ENCODE measurements at regions of chr15 and their contacts with region 1.

Region 1: DNA sequence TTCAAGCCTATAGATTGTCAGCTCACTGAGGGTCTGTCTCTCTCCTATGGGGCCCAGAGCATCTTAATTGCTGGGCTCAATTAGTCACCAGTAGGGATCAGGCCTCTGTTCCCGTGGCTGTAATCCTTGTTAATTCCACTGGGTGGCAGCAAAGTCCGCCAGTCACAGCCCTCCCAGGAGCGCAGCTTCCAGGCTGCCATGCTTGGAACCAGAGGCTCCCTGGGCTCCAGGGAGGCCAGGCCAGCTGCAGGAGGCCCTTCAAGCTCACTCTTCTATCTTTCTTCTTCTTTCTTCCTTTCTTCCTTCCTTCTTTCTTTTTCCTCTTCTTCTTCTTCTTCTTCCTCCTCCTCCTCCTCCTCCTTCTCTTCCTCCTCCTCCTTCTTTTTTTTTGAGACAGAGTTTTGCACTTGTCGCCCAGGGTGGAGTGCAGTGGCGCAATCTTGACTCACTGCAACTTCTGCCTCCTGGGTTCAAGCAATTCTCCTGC is 14.4 kb downstream of the RNU5B-1 start:
- DNase-seq: peak; percentile 56
- ATAC-seq: peak; percentile 100
- H3K4me3 Mint-ChIP-seq: no peak overlapping the region
- H3K27ac Mint-ChIP-seq: peak overlapping the region; percentile 24
- H3K4me1 Mint-ChIP-seq: no peaks in the 10 kb centered on the region
- H3K27me3 Mint-ChIP-seq: peaks cover 23% of the 10 kb centered on the region
- CTCF ChIP-seq: peak; percentile 91

Region 2: DNA sequence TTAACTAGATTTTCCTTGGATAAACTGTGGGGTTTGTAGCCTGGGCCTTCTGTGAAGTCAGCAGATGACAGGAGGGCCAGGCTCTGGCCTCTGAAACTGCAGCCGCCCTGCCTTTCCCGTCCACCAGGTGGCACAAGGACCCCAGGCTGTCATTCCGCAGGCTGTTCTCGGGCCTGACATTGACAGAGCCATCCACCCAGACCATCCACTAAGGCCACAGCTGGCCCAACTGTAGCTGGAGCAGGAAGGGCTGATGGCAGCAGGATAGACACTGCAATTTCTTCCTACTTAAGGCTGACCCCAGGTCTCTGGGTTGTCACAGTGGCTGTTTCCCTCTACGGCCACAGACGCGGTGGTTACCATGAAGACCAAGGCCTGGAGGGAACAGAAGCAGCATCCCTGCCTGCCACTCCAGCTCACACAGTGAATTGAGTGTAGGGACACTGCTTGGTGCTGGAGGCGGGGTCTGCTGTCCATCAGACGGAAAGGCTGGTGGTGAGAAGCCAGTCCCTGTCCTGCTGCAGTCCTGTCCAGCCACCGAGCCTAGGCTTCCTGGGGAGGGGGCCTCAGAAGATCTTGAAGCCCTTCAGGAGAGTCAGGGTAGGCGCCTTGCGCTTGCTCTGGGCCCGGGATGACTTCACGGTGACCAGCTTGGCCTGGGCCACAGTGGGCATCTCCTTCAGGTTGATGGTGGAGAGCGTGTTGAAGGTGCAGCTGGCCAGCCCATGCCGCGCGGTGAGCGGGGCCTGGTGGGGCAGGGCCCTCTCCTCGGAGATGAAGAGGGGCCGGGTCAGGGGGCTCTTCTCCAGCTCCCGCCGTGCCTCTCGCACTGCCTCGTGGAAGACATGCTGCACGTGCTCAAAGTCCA is 264.3 kb before region 1 on chr15:
- CTCF ChIA-PET with region 1: no interaction called
- POLR2A ChIA-PET with region 1: no interaction called
- intact Hi-C with region 1: loop called (anchors 1 kb)
- DNase-seq: peak; percentile 44
- ATAC-seq: peak; percentile 61
- H3K4me3 Mint-ChIP-seq: no peak overlapping the region
- H3K27ac Mint-ChIP-seq: no peak overlapping the region
- H3K4me1 Mint-ChIP-seq: peaks cover 12% of the 10 kb centered on the region
- H3K27me3 Mint-ChIP-seq: no peaks in the 10 kb centered on the region
- CTCF ChIP-seq: no peak

Region 3: DNA sequence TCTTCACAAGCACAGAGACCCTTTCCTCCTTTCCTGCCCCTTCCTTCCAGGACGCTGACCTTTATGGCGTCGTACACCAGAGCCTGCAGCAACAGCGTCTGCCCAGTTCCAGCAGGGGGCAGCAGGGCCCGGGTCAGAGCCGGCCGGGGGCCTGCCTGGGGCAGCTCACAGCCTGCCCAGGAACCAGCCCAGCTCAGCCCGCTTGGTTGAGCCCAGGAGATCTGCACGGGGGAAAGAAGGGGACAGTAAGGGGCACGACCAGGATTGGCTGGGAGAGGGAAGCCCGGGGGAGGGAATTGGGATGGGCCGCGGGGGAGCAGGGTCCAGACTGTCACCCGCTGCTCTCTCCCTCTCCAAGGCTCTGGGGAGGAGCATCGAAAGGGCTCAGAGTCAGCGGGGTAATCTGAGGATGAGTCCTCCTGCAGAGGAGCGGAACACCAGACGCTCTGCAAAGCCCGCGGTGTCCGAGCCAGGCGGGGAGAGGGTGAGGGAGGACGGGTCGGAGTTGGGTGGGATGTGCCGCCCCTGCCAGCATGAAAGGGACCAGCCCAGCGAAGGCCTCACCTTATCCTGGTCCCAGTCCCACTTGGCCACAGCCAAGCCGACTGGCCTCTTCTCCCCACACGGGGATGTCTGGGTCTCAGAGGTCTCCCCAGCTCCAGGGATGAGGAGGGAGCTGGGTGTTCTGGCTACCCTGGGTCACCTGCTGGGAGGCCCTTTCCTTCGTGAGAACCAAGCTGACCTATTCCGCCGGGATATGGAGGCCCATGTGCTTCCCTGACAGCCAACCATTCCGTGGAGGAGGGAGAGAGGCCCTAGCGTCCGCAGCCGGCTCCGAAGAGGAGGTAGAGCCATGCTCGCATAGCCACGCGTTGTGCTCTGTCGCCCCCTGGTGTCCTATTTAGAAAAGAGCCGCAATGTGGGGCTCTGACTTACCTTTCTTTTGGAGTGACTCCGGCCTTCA is 66.3 kb after region 1 on chr15:
- CTCF ChIA-PET with region 1: interaction called, 76 read pairs
- POLR2A ChIA-PET with region 1: no interaction called
- intact Hi-C with region 1: loop called (anchors 1 kb)
- DNase-seq: peak; percentile 68
- ATAC-seq: peak; percentile 84
- H3K4me3 Mint-ChIP-seq: peak overlapping the region; percentile 89
- H3K27ac Mint-ChIP-seq: no peak overlapping the region
- H3K4me1 Mint-ChIP-seq: peaks cover 10% of the 10 kb centered on the region
- H3K27me3 Mint-ChIP-seq: peaks cover 20% of the 10 kb centered on the region
- CTCF ChIP-seq: peak; percentile 12

Region 4: GRCh38 chr15:65400760-65401610 is 82.1 kb after region 1 on chr15:
- CTCF ChIA-PET with region 1: interaction called, 9 read pairs
- POLR2A ChIA-PET with region 1: no interaction called
- intact Hi-C with region 1: loop called (anchors 1 kb)
- DNase-seq: no peak
- ATAC-seq: peak; percentile 66
- H3K4me3 Mint-ChIP-seq: no peak overlapping the region
- H3K27ac Mint-ChIP-seq: no peak overlapping the region
- H3K4me1 Mint-ChIP-seq: peaks cover 8% of the 10 kb centered on the region
- H3K27me3 Mint-ChIP-seq: peaks cover 59% of the 10 kb centered on the region
- CTCF ChIP-seq: no peak

Region 5: DNA sequence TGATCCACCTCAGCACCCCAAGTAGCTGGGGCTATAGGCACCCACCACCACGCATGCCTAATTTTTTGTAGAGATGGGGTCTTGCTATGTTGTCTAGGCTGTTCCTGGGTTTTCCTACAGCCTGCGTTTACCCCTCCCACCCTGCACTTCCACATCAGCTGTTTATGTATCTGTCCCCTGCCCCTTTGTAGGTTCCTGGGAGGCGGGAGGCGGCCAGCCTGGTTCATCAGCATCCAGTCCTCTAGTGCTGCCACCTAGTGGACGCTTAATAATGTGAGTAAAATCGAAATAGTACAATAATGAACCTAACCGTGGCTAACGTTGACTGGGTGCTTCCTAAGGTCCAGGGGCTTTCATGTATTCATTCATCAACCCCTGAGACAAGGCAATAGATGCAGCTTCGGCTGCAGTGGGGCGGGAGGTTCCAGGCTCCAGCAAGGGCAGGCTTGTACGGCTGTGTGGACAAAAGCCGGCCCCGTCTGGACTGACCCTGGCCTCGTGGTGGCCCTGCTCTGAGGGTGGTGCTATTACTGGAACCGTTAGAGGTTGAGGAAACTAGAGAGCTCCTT is 1248.1 kb after region 1 on chr15:
- CTCF ChIA-PET with region 1: no interaction called
- POLR2A ChIA-PET with region 1: no interaction called
- intact Hi-C with region 1: loop called (anchors 2 kb)
- DNase-seq: peak; percentile 21
- ATAC-seq: peak; percentile 64
- H3K4me3 Mint-ChIP-seq: no peak overlapping the region
- H3K27ac Mint-ChIP-seq: no peak overlapping the region
- H3K4me1 Mint-ChIP-seq: peaks cover 5% of the 10 kb centered on the region
- H3K27me3 Mint-ChIP-seq: no peaks in the 10 kb centered on the region
- CTCF ChIP-seq: no peak

Measured in activated B cell treated with CpG ODN at 0.5 μM for 24 hours (primary cell).